Vagina (tissue), 2 donors: ENCODE measurements at regions of chr12 and their contacts with region 1.

Region 1: GRCh38 chr12:85394834-85395233 is 114.8 kb downstream of the ALX1 start:
- DNase-seq: no peak
- H3K4me3 ChIP-seq: no peak overlapping the region
- H3K27ac ChIP-seq: no peak overlapping the region
- H3K4me1 ChIP-seq: no peaks in the 10 kb centered on the region
- H3K27me3 ChIP-seq: no peaks in the 10 kb centered on the region
- CTCF ChIP-seq: no peak
- POLR2A ChIP-seq: no peak

Region 2: GRCh38 chr12:83505586-83505985 is 1889.2 kb before region 1 on chr12:
- intact Hi-C with region 1: loop called (anchors 5 kb)
- DNase-seq: no peak
- H3K4me3 ChIP-seq: no peak overlapping the region
- H3K27ac ChIP-seq: no peak overlapping the region
- H3K4me1 ChIP-seq: no peaks in the 10 kb centered on the region
- H3K27me3 ChIP-seq: no peaks in the 10 kb centered on the region
- CTCF ChIP-seq: no peak
- POLR2A ChIP-seq: no peak

Region 3: DNA sequence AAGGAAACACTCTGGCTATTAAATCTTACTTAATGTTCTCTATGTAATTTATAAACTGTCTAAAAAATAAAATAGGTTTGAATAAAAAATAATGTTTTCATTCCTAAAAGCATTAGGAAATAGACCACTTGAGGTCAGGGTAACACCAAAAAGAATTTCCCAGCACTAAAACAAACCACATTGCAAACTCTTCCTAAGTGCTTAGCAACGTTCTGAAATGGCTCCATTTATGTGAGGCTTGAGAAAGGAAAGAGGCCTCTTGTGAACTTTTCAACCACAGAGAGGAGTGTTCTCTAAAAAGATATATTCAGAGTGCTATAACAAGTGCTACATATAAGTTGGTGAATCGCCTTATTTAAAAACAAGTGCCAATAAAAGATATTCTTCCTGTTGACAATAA is 72.1 kb before region 1 on chr12:
- intact Hi-C with region 1: no loop called
- DNase-seq: no peak
- H3K4me3 ChIP-seq: no peak overlapping the region
- H3K27ac ChIP-seq: no peak overlapping the region
- H3K4me1 ChIP-seq: no peaks in the 10 kb centered on the region
- H3K27me3 ChIP-seq: no peaks in the 10 kb centered on the region
- CTCF ChIP-seq: no peak
- POLR2A ChIP-seq: no peak

Region 4: GRCh38 chr12:85424581-85425348 is 29.9 kb after region 1 on chr12:
- intact Hi-C with region 1: no loop called
- DNase-seq: no peak
- H3K4me3 ChIP-seq: no peak overlapping the region
- H3K27ac ChIP-seq: no peak overlapping the region
- H3K4me1 ChIP-seq: no peaks in the 10 kb centered on the region
- H3K27me3 ChIP-seq: no peaks in the 10 kb centered on the region
- CTCF ChIP-seq: no peak
- POLR2A ChIP-seq: no peak

Region 5: DNA sequence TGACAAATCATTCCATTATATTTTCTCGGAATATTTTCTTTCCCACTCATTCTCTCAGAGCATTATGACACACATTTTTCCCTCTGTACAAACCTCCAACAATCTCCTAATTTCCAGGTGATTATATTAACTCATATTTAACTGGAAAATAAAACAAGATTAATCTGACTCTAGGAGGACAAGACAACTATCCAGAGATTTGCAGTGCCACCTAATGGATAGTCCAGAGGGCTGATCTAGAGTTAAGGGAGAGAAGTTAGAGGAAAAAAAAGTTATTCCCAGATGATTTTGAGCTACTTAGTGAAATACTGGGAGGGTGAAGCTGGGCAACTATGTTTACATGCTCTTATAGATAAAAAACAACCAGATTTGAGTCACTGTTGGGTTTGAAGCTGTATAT is 46.9 kb after region 1 on chr12:
- intact Hi-C with region 1: no loop called
- DNase-seq: no peak
- H3K4me3 ChIP-seq: no peak overlapping the region
- H3K27ac ChIP-seq: no peak overlapping the region
- H3K4me1 ChIP-seq: no peaks in the 10 kb centered on the region
- H3K27me3 ChIP-seq: no peaks in the 10 kb centered on the region
- CTCF ChIP-seq: no peak
- POLR2A ChIP-seq: no peak

Region 6: DNA sequence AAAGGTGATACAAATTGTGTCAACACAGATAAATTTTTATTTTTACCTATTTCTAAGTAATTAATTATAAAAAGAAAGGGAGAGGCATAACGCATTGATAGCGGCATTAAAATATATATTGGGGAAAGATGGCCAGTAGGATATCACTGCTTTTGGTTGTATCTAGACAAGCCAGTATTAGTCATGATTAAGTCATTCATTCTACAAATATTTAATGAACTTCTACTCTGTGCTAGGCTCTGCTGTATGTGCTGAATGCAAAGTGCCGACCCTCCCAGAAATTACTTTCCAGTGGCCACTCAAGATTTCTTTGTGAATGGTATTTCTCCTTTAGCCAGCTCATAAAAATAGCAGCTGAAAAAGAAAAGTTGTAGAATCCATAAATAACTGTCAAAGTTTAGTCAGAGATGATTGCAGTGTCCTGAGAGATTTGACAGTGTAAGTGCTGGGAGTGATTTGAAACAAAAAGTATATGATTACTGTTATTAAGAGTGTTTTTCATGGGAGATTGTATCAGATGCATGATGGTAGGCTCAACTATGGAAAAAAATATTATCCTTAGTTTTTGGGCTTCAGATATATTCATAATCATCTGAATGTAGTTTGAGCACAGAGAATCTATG is 728.1 kb after region 1 on chr12:
- intact Hi-C with region 1: no loop called
- DNase-seq: no peak
- H3K4me3 ChIP-seq: no peak overlapping the region
- H3K27ac ChIP-seq: no peak overlapping the region
- H3K4me1 ChIP-seq: no peaks in the 10 kb centered on the region
- H3K27me3 ChIP-seq: no peaks in the 10 kb centered on the region
- CTCF ChIP-seq: no peak
- POLR2A ChIP-seq: no peak